A673 (cell line): ENCODE measurements at regions of chr4 and their contacts with region 1.

Region 1: GRCh38 chr4:28350485-28350884 is 1489.8 kb downstream of the STIM2 start:
- DNase-seq: peak; percentile 84
- H3K4me3 ChIP-seq: no peak overlapping the region
- H3K27ac ChIP-seq: no peak overlapping the region
- H3K4me1 ChIP-seq: peaks cover 29% of the 10 kb centered on the region
- H3K27me3 ChIP-seq: peaks cover 4% of the 10 kb centered on the region
- CTCF ChIP-seq: no peak

Region 2: DNA sequence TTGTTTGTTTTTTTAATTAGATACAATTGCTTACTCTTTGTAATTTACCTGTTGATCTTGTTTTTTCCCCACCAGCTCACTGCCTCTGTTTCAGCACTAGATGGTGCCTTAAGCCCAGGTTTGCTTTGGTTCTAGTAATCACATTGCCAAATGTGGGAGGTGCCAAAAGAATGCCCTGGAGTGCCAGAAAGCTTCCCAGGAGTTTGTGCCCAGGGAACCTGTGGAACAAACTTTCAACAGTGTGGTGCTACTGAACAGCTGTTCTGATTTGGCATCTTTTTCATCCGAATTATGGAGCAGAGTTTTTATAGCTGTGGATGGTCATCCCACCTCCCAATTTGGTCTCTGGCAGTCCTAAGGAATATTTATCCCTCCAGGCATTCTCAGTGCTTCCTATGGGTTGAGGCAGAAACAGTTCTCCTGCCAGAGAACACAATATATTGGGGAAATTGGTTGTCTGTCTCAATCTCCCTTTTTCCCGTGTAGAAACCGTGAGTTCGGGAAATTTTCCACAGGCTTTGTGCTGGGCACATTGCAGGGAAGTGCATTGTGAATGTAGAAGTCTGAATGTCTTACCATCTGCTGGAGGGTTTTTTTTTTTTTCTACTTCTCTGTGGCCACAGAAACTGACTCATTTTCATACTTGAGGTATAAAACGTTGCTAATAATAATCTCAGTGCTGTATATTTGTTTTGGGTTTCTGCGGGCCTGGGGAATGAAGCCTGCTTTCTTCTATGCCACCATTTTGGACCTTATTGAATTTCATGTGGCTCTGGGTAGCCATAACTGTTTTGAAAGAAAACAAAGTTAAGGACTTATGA is 488.9 kb before region 1 on chr4:
- CTCF ChIA-PET with region 1: no interaction called
- POLR2A ChIA-PET with region 1: no interaction called
- intact Hi-C with region 1: loop called (anchors 5 kb)
- DNase-seq: peak; percentile 75
- H3K4me3 ChIP-seq: no peak overlapping the region
- H3K27ac ChIP-seq: no peak overlapping the region
- H3K4me1 ChIP-seq: no peaks in the 10 kb centered on the region
- H3K27me3 ChIP-seq: no peaks in the 10 kb centered on the region
- CTCF ChIP-seq: peak; percentile 84

Region 3: GRCh38 chr4:28238876-28239275 is 111.6 kb before region 1 on chr4:
- CTCF ChIA-PET with region 1: no interaction called
- POLR2A ChIA-PET with region 1: no interaction called
- intact Hi-C with region 1: loop called (anchors 2 kb)
- DNase-seq: peak; percentile 72
- H3K4me3 ChIP-seq: no peak overlapping the region
- H3K27ac ChIP-seq: peak overlapping the region; percentile 14
- H3K4me1 ChIP-seq: peaks cover 20% of the 10 kb centered on the region
- H3K27me3 ChIP-seq: no peaks in the 10 kb centered on the region
- CTCF ChIP-seq: no peak

Region 4: GRCh38 chr4:28310926-28311325 is 39.6 kb before region 1 on chr4:
- CTCF ChIA-PET with region 1: no interaction called
- POLR2A ChIA-PET with region 1: no interaction called
- intact Hi-C with region 1: no loop called
- DNase-seq: no peak
- H3K4me3 ChIP-seq: no peak overlapping the region
- H3K27ac ChIP-seq: no peak overlapping the region
- H3K4me1 ChIP-seq: no peaks in the 10 kb centered on the region
- H3K27me3 ChIP-seq: no peaks in the 10 kb centered on the region
- CTCF ChIP-seq: no peak